ENCODE measurements at regions of chr5 and their contacts with region 1.

Region 1: GRCh38 chr5:122009436-122009835 is 47.7 kb downstream of the SRFBP1 start:
- DNase-seq: no peak
- H3K4me3 Mint-ChIP-seq: no peak overlapping the region
- H3K27ac Mint-ChIP-seq: no peak overlapping the region
- H3K4me1 Mint-ChIP-seq: no peaks in the 10 kb centered on the region
- H3K27me3 Mint-ChIP-seq: no peaks in the 10 kb centered on the region
- CTCF ChIP-seq: no peak

Region 2: DNA sequence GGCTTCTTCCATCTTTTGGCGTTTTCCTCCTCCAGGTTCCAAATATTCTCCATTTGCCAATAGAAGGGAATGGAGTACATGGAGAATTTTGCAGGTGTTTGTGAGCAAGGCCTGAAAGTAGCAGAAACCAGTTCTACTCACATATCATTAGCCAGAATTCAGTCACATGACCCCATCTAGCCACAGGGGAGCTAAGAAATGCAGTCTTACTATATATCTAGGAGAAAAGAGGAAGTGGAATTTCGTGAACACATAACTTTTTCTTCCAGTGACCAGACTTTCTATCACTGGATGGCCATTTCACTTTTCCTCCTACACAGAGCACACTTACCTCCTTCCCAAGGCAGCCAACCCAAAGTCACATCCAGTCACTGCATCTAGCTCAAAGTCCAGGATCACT is 13.5 kb after region 1 on chr5:
- CTCF ChIA-PET with region 1: no interaction called
- intact Hi-C with region 1: loop called (anchors 2 kb)
- DNase-seq: no peak
- H3K4me3 Mint-ChIP-seq: no peak overlapping the region
- H3K27ac Mint-ChIP-seq: no peak overlapping the region
- H3K4me1 Mint-ChIP-seq: no peaks in the 10 kb centered on the region
- H3K27me3 Mint-ChIP-seq: no peaks in the 10 kb centered on the region
- CTCF ChIP-seq: no peak

Region 3: GRCh38 chr5:122089096-122090013 is 79.9 kb after region 1 on chr5:
- CTCF ChIA-PET with region 1: no interaction called
- intact Hi-C with region 1: no loop called
- DNase-seq: no peak
- H3K4me3 Mint-ChIP-seq: no peak overlapping the region
- H3K27ac Mint-ChIP-seq: no peak overlapping the region
- H3K4me1 Mint-ChIP-seq: peaks cover 7% of the 10 kb centered on the region
- H3K27me3 Mint-ChIP-seq: no peaks in the 10 kb centered on the region
- CTCF ChIP-seq: no peak

Measured in Calu3 (cell line).